Naive thymus-derived CD8-positive, alpha-beta T cell (primary cell): ENCODE measurements at regions of chr4 and their contacts with region 1.

Region 1: DNA sequence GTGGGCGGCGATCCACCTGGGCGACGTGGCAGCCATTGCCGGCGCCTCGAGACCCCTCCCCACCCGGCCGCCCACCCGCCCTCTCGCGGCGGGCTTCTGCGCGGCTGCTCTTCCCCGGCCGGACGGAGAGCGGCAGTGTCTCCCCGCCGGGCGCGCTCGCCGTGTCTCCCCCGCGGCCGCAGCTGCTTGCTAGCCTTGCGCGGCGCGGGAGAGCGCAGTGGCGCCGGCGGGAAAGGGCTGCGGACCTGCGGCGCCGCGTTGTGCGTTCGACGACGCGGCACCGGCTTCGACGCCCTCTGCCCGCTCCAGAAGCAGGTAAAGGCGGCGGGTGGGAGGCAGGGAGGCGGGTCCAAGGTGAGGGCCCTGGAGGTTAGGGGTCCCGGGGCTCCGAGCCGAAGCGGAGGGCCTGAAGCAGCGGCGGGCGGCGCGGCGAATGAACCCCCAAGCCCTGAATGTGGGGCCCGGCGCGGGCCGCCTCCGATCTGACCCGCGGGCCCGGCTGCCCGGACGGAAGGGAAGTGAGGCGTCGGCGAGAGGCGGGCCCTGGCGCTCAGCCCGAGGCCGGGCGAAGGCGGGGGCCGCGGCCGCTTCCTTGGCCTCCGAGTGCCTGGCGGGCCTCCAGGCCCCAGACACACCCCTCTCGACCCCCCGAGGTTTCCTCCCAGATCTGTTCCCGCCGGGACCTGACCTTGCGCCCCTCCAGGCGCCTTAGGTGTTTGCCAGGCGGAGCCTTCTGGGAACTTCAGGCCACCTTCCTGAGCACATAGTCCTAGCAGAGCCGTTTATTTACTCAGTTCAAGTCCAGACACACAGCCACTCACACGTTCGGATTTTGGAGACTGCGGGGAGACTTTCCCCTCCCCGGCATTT is at the start of gene N4BP2:
- DNase-seq: peak; percentile 51 to 85 (median 72)
- ATAC-seq: peak; percentile 65 to 67
- H3K4me3 Mint-ChIP-seq: peak within 1 kb of the TSS; percentile 92 to 100 (median 95)
- H3K27ac Mint-ChIP-seq: peak within 1 kb of the TSS; percentile 80 to 99 (median 97)
- H3K4me1 Mint-ChIP-seq: peaks cover 17 to 36% (median 33%) of the 10 kb centered on the region in 4 donors
- H3K27me3 Mint-ChIP-seq: no peaks in the 10 kb centered on the region
- polyA plus RNA-seq, gene N4BP2: 10.7 to 14.3 (median 13.5) TPM

Region 2: DNA sequence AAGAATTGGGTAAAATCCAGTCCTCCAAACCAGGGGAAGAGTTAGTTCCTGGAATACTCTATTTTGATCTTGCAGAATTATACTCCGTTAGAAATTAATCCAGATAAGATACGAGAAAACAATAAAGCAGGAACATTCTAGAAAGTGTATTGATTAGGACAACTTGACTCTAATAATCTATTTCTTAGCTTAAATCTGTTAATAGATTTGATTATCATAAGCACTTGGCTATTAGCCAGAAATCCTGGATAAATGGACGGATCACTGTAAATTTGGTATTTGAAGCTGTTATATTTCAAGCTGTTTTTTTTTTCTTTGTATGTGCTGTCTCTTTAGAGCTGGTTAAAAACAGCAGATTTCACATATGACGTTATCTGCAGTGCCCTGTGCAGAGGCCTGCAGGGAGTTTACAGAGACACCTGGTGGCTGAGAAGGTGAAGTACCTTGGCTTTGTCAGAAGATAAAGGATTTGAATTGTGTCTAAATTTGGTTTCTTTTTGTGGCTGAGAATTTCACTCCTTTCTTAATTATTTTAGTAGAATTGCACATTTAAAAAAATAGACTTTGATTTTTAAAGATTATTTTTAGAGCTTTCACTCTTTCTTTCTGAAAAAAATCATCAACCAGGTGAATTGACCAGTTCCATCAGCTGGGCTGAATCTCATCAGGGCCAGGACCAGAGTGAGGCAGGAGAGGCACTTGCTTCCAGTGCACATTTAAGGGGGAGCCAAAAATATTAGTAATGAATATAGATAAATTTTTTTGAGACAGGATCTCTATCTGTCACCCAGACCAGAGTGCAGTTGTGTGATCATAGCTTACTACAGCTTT is 268.5 kb after region 1 on chr4:
- POLR2A ChIA-PET with region 1: interaction called, 18 read pairs
- DNase-seq: peak; percentile 24 to 88 (median 70)
- ATAC-seq: peak; percentile 99
- H3K4me3 Mint-ChIP-seq: peak overlapping the region in 3 of 10 donors; percentile 2 to 12 (median 3)
- H3K27ac Mint-ChIP-seq: peak overlapping the region in 9 of 10 donors; percentile 2 to 90 (median 56)
- H3K4me1 Mint-ChIP-seq: peaks cover 10 to 32% (median 21%) of the 10 kb centered on the region in 4 donors
- H3K27me3 Mint-ChIP-seq: peaks cover 0 to 5% (median 0%) of the 10 kb centered on the region in 5 donors